Activated CD4-positive, alpha-beta T cell treated with anti-CD3 and anti-CD28 coated beads, Interleukin-2, amount 10 ng/mL, durations not matched to agents 24 days and 14 days (primary cell): ENCODE measurements at regions of chr12 and their contacts with region 1.

Region 1: GRCh38 chr12:27332407-27333301 is at the start of gene BMAL2:
- DNase-seq: peak; percentile 86
- H3K4me3 Mint-ChIP-seq: peak within 1 kb of the TSS; percentile 97
- H3K27ac Mint-ChIP-seq: peak within 1 kb of the TSS; percentile 98
- H3K4me1 Mint-ChIP-seq: peaks cover 58% of the 10 kb centered on the region
- H3K27me3 Mint-ChIP-seq: no peaks in the 10 kb centered on the region
- total RNA-seq, gene BMAL2: 55.9 and 58.8 TPM in 2 replicates

Region 2: GRCh38 chr12:27207615-27208413 is 124.8 kb before region 1 on chr12:
- intact Hi-C with region 1: loop called (anchors 5 kb)
- DNase-seq: peak; percentile 76
- H3K4me3 Mint-ChIP-seq: no peak overlapping the region
- H3K27ac Mint-ChIP-seq: peak overlapping the region; percentile 47
- H3K4me1 Mint-ChIP-seq: peaks cover 21% of the 10 kb centered on the region
- H3K27me3 Mint-ChIP-seq: no peaks in the 10 kb centered on the region

Region 3: GRCh38 chr12:27462151-27462694 is 129.6 kb after region 1 on chr12:
- intact Hi-C with region 1: loop called (anchors 5 kb)
- DNase-seq: peak; percentile 60
- H3K4me3 Mint-ChIP-seq: peak overlapping the region; percentile 27
- H3K27ac Mint-ChIP-seq: peak overlapping the region; percentile 68
- H3K4me1 Mint-ChIP-seq: peaks cover 58% of the 10 kb centered on the region
- H3K27me3 Mint-ChIP-seq: no peaks in the 10 kb centered on the region

Region 4: DNA sequence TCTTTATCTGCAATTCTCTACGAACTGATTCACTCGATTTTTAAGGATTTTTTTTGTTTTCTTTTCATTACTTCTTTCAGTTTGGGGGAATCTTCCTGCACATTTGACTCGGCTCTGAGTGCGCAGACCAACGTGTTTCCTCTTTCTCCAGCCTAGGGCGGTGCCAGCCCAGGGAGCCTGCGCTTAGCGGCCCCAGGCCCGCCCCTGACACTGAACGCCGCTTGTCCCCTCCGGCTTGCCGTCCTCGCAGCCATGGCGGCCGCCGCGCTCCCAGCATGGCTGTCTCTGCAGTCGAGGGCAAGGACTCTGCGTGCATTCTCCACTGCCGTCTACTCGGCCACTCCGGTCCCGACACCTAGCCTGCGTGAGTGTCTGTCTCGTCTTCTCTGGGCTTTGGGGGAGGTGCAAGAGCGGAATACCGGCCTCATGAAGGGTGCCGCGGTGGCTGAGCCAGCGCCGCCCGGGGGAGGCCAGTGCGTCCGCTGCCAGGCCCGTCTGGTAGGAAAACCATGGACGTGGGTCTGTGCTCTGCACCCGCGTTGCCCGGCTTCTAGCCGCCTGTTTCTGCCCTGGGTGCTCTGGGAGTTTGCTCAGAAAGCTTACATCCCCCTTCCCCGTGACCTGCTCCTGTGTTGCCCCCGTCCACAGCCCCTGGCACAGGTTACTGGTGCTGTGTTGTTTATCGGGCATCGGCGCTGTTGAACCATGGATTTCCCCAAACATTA is 378.1 kb after region 1 on chr12 and contains the start of gene MRPS35:
- intact Hi-C with region 1: loop called (anchors 2 kb)
- DNase-seq: peak; percentile 98
- H3K4me3 Mint-ChIP-seq: peak within 1 kb of the TSS; percentile 95
- H3K27ac Mint-ChIP-seq: peak within 1 kb of the TSS; percentile 91
- H3K4me1 Mint-ChIP-seq: peaks cover 31% of the 10 kb centered on the region
- H3K27me3 Mint-ChIP-seq: peaks cover 9% of the 10 kb centered on the region
- total RNA-seq, gene MRPS35: 57.7 and 58.1 TPM in 2 replicates

Region 5: DNA sequence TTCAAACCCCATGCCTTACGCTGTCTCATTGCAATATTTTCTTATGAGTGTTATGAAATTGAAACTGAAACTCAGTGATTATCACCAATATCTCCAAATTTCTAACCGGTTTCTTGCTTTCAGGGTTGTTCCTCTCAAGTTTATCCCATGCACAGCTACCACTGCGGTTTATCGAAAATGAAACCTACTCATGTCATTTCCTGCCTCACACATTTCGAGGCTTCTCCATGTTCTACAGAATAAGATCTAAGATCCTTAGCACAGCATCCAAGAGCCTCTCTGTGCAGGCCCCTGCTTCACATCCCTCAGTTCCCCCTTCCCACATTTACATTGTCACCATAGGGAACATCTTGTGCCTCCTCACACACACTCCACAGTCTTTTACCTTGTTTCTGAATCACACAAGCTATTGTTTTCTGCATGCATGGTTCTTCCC is 1770.9 kb after region 1 on chr12:
- intact Hi-C with region 1: loop called (anchors 5 kb)
- DNase-seq: peak; percentile 90
- H3K4me3 Mint-ChIP-seq: peak overlapping the region; percentile 59
- H3K27ac Mint-ChIP-seq: peak overlapping the region; percentile 84
- H3K4me1 Mint-ChIP-seq: peaks cover 31% of the 10 kb centered on the region
- H3K27me3 Mint-ChIP-seq: peaks cover 7% of the 10 kb centered on the region